ENCODE measurements at regions of chr1 and their contacts with region 1.

Region 1: GRCh38 chr1:224182866-224183590 is at the start of gene DEGS1:
- DNase-seq: peak; percentile 84 to 88 (median 85)
- H3K4me3 ChIP-seq: peak within 1 kb of the TSS; percentile 79
- H3K4me3 Mint-ChIP-seq: peak within 1 kb of the TSS; percentile 90 to 97 (median 94)
- H3K27ac ChIP-seq: peak within 1 kb of the TSS; percentile 93
- H3K27ac Mint-ChIP-seq: peak within 1 kb of the TSS; percentile 91 to 99 (median 98)
- H3K4me1 ChIP-seq: peaks cover 59% of the 10 kb centered on the region
- H3K4me1 Mint-ChIP-seq: peaks cover 27 to 53% (median 40%) of the 10 kb centered on the region in 4 donors
- H3K27me3 ChIP-seq: no peaks in the 10 kb centered on the region
- H3K27me3 Mint-ChIP-seq: no peaks in the 10 kb centered on the region
- total RNA-seq, gene DEGS1: 58.5 TPM

Region 2: DNA sequence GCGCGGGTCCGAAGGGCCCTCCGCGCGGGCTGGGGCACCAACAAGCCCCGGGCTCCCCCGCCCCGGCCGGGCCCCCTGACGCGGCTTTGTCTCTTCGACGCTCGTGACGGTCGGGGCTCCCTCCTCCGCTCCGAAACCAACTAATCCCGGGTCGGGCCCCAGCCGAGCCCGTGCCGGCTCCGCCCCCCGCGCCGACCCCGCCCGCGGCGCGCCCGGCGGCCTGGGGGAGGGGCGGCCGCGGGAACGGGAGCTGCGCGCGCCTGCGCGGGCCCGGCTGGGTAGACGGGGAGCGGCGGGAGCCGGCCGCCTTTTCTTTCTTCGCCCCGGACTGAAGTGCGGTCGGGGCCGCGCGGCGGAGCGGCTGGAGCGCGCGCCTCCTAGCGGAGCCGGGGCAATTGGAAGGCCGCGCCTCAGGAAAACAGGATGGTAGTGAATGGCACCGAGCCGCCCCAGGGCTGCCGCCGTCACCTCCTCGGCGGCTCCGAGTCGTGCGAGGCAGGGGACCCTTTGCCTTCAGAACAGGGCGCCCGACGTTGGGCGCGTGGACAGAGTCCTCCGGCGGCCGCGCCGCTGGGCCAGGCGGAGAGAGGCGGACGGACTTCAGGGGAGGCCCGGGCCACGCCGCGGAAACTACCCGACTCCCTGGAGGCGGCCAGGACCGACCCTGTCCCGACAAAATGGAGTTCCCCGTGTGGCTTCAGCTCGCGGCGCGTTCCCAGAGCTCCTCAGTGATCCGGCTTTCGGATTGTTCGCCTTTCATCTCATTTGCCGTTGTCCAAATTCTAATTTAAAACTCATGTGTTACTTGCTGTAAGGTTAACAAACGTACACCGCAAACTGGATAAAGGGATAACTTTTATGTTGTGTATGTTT is 337.0 kb before region 1 on chr1 and contains the start of gene TP53BP2:
- CTCF ChIA-PET with region 1: no interaction called
- POLR2A ChIA-PET with region 1: interaction called, 6 read pairs
- intact Hi-C with region 1: loop called (anchors 10 kb)
- DNase-seq: peak; percentile 89 to 92 (median 91)
- H3K4me3 ChIP-seq: peak within 1 kb of the TSS; percentile 74 to 84
- H3K4me3 Mint-ChIP-seq: peak within 1 kb of the TSS; percentile 94 to 98 (median 95)
- H3K27ac ChIP-seq: peak within 1 kb of the TSS; percentile 98
- H3K27ac Mint-ChIP-seq: peak within 1 kb of the TSS; percentile 97 to 100 (median 98)
- H3K4me1 ChIP-seq: peaks cover 52% of the 10 kb centered on the region
- H3K4me1 Mint-ChIP-seq: peaks cover 31 to 51% (median 35%) of the 10 kb centered on the region in 4 donors
- H3K27me3 ChIP-seq: no peaks in the 10 kb centered on the region
- H3K27me3 Mint-ChIP-seq: no peaks in the 10 kb centered on the region
- total RNA-seq, gene TP53BP2: 48.3 to 49.8 TPM

Region 3: GRCh38 chr1:224067621-224068457 is 115.2 kb before region 1 on chr1:
- CTCF ChIA-PET with region 1: no interaction called
- POLR2A ChIA-PET with region 1: no interaction called
- intact Hi-C with region 1: no loop called
- DNase-seq: no peak
- H3K4me3 ChIP-seq: no peak overlapping the region
- H3K4me3 Mint-ChIP-seq: no peak overlapping the region
- H3K27ac ChIP-seq: no peak overlapping the region
- H3K27ac Mint-ChIP-seq: no peak overlapping the region
- H3K4me1 ChIP-seq: no peaks in the 10 kb centered on the region
- H3K4me1 Mint-ChIP-seq: peaks cover 3 to 10% (median 5%) of the 10 kb centered on the region in 4 donors
- H3K27me3 ChIP-seq: no peaks in the 10 kb centered on the region
- H3K27me3 Mint-ChIP-seq: peaks cover 7 to 11% of the 10 kb centered on the region in 2 donors

Region 4: DNA sequence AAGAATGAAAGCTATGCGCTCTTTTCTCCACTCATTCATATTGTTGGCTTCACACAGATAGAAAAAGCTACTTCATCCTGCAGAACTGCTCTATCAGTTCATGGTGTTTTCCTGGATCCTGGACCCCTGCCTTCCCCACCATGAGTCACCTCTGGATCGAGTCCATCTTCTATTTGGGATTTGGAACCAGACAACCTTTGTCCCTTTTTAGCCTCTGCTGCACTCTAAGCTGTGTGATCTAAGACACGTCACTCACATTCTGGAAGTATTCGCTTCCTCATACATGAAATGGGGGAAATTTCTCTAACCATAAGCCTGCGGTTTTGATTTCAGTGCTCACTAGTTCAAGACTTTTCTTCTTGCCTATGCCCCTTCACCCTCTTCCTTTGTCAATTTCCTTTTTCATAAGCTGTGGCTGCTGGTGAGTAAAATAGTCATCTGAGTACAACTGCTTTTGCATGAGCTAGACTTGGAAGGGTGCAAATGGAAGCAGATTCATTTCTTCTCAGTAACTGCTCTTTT is 14.1 kb before region 1 on chr1:
- CTCF ChIA-PET with region 1: interaction called, 6 read pairs
- POLR2A ChIA-PET with region 1: interaction called, 49 read pairs
- intact Hi-C with region 1: loop called (anchors 1 kb)
- DNase-seq: peak; percentile 62 to 76 (median 68)
- H3K4me3 ChIP-seq: no peak overlapping the region
- H3K4me3 Mint-ChIP-seq: peak overlapping the region; percentile 21 to 80 (median 58)
- H3K27ac ChIP-seq: no peak overlapping the region
- H3K27ac Mint-ChIP-seq: peak overlapping the region; percentile 54 to 91 (median 80)
- H3K4me1 ChIP-seq: peaks cover 29% of the 10 kb centered on the region
- H3K4me1 Mint-ChIP-seq: peaks cover 23 to 38% (median 29%) of the 10 kb centered on the region in 4 donors
- H3K27me3 ChIP-seq: no peaks in the 10 kb centered on the region
- H3K27me3 Mint-ChIP-seq: no peaks in the 10 kb centered on the region

Region 5: GRCh38 chr1:224213438-224214112 is 30.5 kb after region 1 on chr1:
- CTCF ChIA-PET with region 1: no interaction called
- POLR2A ChIA-PET with region 1: no interaction called
- intact Hi-C with region 1: no loop called
- DNase-seq: no peak
- H3K4me3 ChIP-seq: no peak overlapping the region
- H3K4me3 Mint-ChIP-seq: no peak overlapping the region
- H3K27ac ChIP-seq: no peak overlapping the region
- H3K27ac Mint-ChIP-seq: peak overlapping the region in 2 of 7 donors; percentile 12 to 43
- H3K4me1 ChIP-seq: no peaks in the 10 kb centered on the region
- H3K4me1 Mint-ChIP-seq: no peaks in the 10 kb centered on the region
- H3K27me3 ChIP-seq: no peaks in the 10 kb centered on the region
- H3K27me3 Mint-ChIP-seq: no peaks in the 10 kb centered on the region

Region 6: GRCh38 chr1:224245188-224245587 is 62.2 kb after region 1 on chr1:
- CTCF ChIA-PET with region 1: interaction called, 4 read pairs
- POLR2A ChIA-PET with region 1: interaction called, 24 read pairs
- intact Hi-C with region 1: loop called (anchors 10 kb)
- DNase-seq: peak in 4 of 5 donors; percentile 29 to 49 (median 39)
- H3K4me3 ChIP-seq: no peak overlapping the region
- H3K4me3 Mint-ChIP-seq: peak overlapping the region in 7 of 8 donors; percentile 12 to 69 (median 39)
- H3K27ac ChIP-seq: no peak overlapping the region
- H3K27ac Mint-ChIP-seq: peak overlapping the region; percentile 78 to 94 (median 87)
- H3K4me1 ChIP-seq: peaks cover 24% of the 10 kb centered on the region
- H3K4me1 Mint-ChIP-seq: peaks cover 15 to 31% (median 18%) of the 10 kb centered on the region in 4 donors
- H3K27me3 ChIP-seq: no peaks in the 10 kb centered on the region
- H3K27me3 Mint-ChIP-seq: no peaks in the 10 kb centered on the region

Region 7: DNA sequence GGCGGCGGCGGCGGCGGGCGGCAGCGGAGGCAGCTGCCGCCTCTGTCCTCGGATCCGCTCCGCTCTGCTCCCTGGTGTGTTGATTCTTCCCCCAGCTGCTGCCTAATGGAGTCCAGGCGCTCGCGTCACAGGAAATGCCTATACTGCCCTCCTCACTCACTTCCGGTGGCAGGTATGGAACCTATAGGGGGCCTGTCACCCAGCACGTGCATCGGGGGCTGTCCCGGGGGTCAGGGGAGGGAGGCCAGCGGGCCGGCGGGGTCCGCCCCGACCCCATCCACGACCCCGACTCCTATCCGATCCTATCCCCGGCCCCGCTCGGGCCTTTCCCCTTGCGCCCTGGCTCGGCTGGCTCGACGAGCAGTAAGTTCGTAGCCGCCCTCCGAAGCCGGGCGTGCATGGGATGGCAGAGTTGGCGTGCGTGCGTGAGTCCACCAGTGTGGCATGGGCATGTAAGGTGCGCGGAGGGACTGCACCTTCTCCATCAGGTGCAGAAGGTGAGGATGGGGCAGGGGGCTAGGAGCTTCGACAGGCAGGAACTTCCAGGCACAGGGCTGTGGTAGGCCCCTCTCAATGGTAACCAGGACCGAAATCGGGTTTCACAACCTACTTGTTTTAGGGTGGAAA is 251.8 kb after region 1 on chr1 and contains the start of gene WDR26:
- CTCF ChIA-PET with region 1: interaction called, 3 read pairs
- POLR2A ChIA-PET with region 1: interaction called, 21 read pairs
- intact Hi-C with region 1: loop called (anchors 5 kb)
- DNase-seq: peak; percentile 85 to 93 (median 87)
- H3K4me3 ChIP-seq: peak within 1 kb of the TSS; percentile 73 to 96
- H3K4me3 Mint-ChIP-seq: peak within 1 kb of the TSS; percentile 93 to 97 (median 97)
- H3K27ac ChIP-seq: peak within 1 kb of the TSS; percentile 94
- H3K27ac Mint-ChIP-seq: peak within 1 kb of the TSS; percentile 97 to 99 (median 99)
- H3K4me1 ChIP-seq: peaks cover 57% of the 10 kb centered on the region
- H3K4me1 Mint-ChIP-seq: peaks cover 39 to 69% (median 49%) of the 10 kb centered on the region in 4 donors
- H3K27me3 ChIP-seq: no peaks in the 10 kb centered on the region
- H3K27me3 Mint-ChIP-seq: no peaks in the 10 kb centered on the region
- total RNA-seq, gene WDR26: 121 to 123 TPM